Colonic mucosa (tissue), 4 donors: ENCODE measurements at regions of chr3 and their contacts with region 1.

Region 1: GRCh38 chr3:173553635-173554280 is 156.2 kb downstream of the NLGN1 start:
- DNase-seq: no peak
- H3K4me3 ChIP-seq: no peak overlapping the region
- H3K27ac ChIP-seq: no peak overlapping the region
- H3K4me1 ChIP-seq: no peaks in the 10 kb centered on the region
- H3K27me3 ChIP-seq: no peaks in the 10 kb centered on the region
- CTCF ChIP-seq: peak; percentile 22

Region 2: GRCh38 chr3:172814738-172815137 is 739.0 kb before region 1 on chr3:
- intact Hi-C with region 1: loop called (anchors 10 kb)
- DNase-seq: no peak
- H3K4me3 ChIP-seq: no peak overlapping the region
- H3K27ac ChIP-seq: no peak overlapping the region
- H3K4me1 ChIP-seq: no peaks in the 10 kb centered on the region
- H3K27me3 ChIP-seq: no peaks in the 10 kb centered on the region
- CTCF ChIP-seq: no peak

Region 3: DNA sequence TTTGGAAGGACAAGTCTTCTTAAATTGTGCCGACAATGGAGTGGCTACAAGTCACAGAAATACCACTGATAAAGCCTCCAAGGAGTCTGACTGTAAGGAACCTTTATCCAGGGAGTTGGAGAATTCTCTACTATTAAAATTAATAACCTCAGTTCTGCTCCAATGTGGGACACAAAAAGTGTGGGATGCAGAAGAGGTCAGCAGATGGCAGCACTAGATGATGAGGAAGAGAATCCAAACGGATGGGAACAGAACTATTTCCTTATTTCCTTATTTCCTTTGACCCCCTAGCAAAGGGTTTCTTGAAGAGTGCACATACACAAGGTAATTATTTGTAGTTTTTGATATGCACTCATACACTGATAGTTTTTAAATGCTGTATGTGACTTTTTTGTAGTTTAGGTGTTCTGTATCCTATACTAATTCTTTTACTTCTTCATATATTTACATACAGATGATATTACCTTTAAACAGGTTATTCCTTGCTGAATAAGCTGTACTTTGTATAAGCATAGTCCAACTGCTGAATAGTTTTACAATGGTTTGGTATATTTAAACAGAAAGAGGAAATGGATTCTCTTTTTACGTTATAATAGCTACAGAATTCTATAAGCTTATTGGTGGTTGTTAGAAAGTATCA is 181.8 kb before region 1 on chr3:
- intact Hi-C with region 1: loop called (anchors 10 kb)
- DNase-seq: peak; percentile 29
- H3K4me3 ChIP-seq: no peak overlapping the region
- H3K27ac ChIP-seq: no peak overlapping the region
- H3K4me1 ChIP-seq: no peaks in the 10 kb centered on the region
- H3K27me3 ChIP-seq: no peaks in the 10 kb centered on the region
- CTCF ChIP-seq: peak; percentile 30